ENCODE measurements at regions of chr2 and their contacts with region 1.

Region 1: GRCh38 chr2:138090330-138090729 is 126.1 kb downstream of the HNMT start:
- H3K4me3 ChIP-seq: no peak overlapping the region
- H3K27ac ChIP-seq: no peak overlapping the region
- H3K4me1 ChIP-seq: peaks cover 4% of the 10 kb centered on the region
- CTCF ChIP-seq: no peak

Region 2: GRCh38 chr2:137838255-137839092 is 251.9 kb before region 1 on chr2:
- CTCF ChIA-PET with region 1: no interaction called
- POLR2A ChIA-PET with region 1: no interaction called
- H3K4me3 ChIP-seq: no peak overlapping the region
- H3K27ac ChIP-seq: no peak overlapping the region
- H3K4me1 ChIP-seq: no peaks in the 10 kb centered on the region
- CTCF ChIP-seq: peak; percentile 43; the same call in 1 of the 2 replicates

Region 3: GRCh38 chr2:137947728-137948336 is 142.5 kb before region 1 on chr2:
- CTCF ChIA-PET with region 1: interaction called, 20 read pairs
- POLR2A ChIA-PET with region 1: no interaction called
- H3K4me3 ChIP-seq: no peak overlapping the region
- H3K27ac ChIP-seq: no peak overlapping the region
- H3K4me1 ChIP-seq: no peaks in the 10 kb centered on the region
- CTCF ChIP-seq: peak; percentile 33; the same call in 1 of the 2 replicates

Region 4: DNA sequence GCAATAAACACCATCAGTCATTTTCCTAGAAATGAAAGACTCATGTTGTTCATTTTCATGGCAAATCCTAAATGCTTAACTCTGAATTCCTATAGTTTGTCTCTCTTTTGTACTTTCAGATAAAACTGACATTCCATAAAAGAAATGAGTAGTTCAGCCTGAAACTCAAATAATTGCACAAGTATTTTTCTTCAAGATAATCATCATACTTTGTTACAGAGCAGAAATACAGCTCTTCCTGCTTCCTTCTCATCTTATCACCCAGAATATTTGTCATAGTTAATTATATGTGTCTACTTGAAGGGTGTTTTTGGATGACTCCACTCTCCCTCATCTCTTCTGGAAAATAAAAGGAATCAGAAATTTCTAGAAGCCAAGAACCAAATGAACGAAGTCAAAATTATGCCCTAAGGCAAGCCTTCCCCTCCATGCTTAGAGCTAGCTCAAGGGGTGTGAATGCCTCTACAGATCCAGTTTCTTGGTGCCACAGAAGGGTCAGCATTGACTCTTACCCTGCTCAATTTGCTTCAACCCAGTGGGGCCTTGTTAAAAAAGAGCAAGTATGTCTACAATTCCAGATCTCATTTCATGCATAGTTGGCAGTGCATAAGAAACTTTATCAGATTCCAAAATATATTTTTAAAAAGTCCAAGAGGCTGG is 15.2 kb after region 1 on chr2:
- CTCF ChIA-PET with region 1: interaction called, 10 read pairs
- POLR2A ChIA-PET with region 1: no interaction called
- H3K4me3 ChIP-seq: no peak overlapping the region
- H3K27ac ChIP-seq: no peak overlapping the region
- H3K4me1 ChIP-seq: no peaks in the 10 kb centered on the region
- CTCF ChIP-seq: no peak

Region 5: GRCh38 chr2:138321458-138321857 is 231.1 kb after region 1 on chr2:
- CTCF ChIA-PET with region 1: no interaction called
- POLR2A ChIA-PET with region 1: no interaction called
- H3K4me3 ChIP-seq: no peak overlapping the region
- H3K27ac ChIP-seq: no peak overlapping the region
- H3K4me1 ChIP-seq: no peaks in the 10 kb centered on the region
- CTCF ChIP-seq: no peak

Region 6: DNA sequence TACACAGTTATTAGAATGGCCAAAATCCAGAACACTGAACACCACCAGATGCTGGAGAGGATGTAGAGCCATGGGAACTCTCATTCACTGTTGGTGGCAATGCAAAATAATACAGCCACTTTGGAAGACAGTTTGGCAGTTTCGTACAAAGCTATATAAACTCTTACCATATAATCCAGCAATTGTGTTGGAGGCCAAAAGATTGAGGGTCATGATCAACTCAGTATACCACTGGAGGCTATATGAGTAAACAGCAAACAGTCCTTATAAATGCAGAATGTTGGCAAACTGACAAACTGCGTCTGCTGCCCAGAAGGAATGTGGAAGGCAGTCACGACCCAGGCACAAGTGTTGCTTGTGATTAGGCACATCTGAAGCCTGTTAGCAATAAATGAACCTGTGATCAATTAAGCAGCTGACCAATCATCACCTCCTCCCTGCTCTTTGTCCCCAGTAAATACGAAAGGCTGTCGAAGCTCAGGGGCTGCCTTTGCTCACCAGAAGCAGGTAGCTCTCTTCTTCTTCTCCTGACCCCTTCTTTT is 313.1 kb after region 1 on chr2:
- CTCF ChIA-PET with region 1: no interaction called
- POLR2A ChIA-PET with region 1: no interaction called
- H3K4me3 ChIP-seq: no peak overlapping the region
- H3K27ac ChIP-seq: no peak overlapping the region
- H3K4me1 ChIP-seq: no peaks in the 10 kb centered on the region
- CTCF ChIP-seq: no peak

Measured in HEK293 (cell line).